ENCODE measurements at regions of chr1 and their contacts with region 1.

Region 1: GRCh38 chr1:21931171-21932093 is 5.7 kb downstream of the HSPG2 start:
- DNase-seq: peak in 1 of 2 donors; percentile 71
- ATAC-seq: peak; percentile 21 to 74 (median 48)
- H3K4me3 ChIP-seq: peak overlapping the region in 8 of 10 donors; percentile 1 to 91 (median 49)
- H3K27ac ChIP-seq: peak overlapping the region; percentile 89 to 99 (median 94)
- H3K4me1 ChIP-seq: peaks cover 49 to 100% (median 89%) of the 10 kb centered on the region in 9 donors
- H3K27me3 ChIP-seq: peaks cover 0 to 5% (median 0%) of the 10 kb centered on the region in 7 donors
- CTCF ChIP-seq: no peak

Region 2: DNA sequence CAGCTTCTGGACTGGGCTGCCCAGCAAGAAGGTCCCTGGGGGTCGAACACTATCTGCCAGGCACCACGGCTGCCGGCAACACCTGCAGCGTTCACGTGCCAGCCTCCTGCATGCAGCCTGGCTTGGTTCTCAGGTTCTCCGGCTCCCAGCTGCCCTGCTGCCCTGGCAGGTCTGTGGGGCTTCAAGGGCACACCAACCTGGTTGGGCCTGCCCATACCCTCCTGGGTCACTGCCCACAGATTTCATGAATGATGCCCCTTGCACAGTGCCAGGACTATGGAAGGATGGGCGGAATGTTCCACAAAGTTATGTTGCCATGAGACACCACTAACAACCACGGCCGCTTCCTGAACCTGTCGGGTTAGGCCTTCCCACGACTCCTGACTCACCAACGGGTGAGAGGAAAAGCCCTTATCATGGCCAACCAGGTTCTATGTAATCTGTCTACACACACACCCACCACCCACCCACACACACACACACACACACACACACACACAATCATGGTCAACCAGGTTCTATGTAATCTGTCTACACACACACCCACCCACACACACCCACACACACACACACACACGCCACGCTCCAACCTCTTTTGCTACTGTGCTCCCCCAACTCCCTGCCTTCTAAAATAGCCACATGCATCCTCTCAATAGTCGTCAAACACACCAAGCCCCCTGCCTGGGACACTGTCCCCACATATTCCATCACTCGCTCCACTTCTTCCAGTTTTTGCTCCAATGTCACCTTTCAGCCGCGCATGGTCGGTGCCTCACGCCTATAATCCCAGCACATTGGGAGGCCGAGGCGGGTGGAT is 26.5 kb before region 1 on chr1:
- intact Hi-C with region 1: loop called in 4 of 10 experiments (anchors 2 to 5 kb)
- DNase-seq: peak; percentile 59 to 72
- ATAC-seq: peak in 7 of 8 donors; percentile 6 to 69 (median 31)
- H3K4me3 ChIP-seq: no peak overlapping the region
- H3K27ac ChIP-seq: peak overlapping the region; percentile 76 to 99 (median 92)
- H3K4me1 ChIP-seq: peaks cover 85 to 100% (median 98%) of the 10 kb centered on the region in 9 donors
- H3K27me3 ChIP-seq: no peaks in the 10 kb centered on the region
- CTCF ChIP-seq: no peak

Region 3: DNA sequence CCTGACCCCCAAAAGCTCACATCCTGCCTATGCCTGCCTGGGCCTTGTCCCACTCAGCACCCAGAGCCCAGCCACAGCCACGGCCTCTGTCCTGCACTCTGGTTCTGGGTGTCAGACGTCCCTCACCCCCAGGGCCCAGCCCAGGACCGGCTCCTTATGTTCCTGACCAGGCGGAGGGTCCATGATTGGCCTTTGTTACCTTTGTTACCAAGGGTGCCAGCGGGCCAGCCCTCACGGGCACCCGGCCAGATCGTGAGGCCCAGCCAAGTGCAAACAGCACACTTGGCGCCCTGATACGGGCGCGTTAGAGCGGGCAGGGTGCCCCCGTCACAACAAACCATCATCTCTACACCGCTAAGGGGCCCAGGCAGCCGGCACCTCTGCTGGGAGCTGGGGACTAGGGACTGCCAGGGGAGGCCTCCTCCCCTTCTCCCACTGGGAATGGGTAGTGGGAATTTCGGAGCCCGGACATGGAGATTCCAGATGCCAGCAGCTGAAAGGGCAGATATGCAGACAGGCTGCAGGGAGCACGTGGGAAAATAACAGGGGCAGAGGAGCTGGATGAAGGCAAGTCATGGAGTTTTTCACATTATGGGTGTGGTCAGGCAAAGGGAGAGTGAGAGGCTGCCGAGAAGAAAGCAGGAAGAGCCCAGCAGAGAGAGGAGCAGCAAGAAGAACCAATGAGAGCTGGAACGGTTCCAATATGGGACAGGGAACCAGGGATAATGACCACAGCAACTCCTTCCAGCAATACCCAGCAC is 16.4 kb before region 1 on chr1:
- intact Hi-C with region 1: loop called in 2 of 10 experiments (anchors 2 kb)
- DNase-seq: peak in 1 of 2 donors; percentile 72
- ATAC-seq: peak in 7 of 8 donors; percentile 16 to 68 (median 50)
- H3K4me3 ChIP-seq: no peak overlapping the region
- H3K27ac ChIP-seq: peak overlapping the region; percentile 84 to 99 (median 92)
- H3K4me1 ChIP-seq: peaks cover 57 to 100% (median 99%) of the 10 kb centered on the region in 9 donors
- H3K27me3 ChIP-seq: no peaks in the 10 kb centered on the region
- CTCF ChIP-seq: no peak